ENCODE measurements at regions of chr1 and their contacts with region 1.

Region 1: GRCh38 chr1:175035865-175036264 is 12.6 kb upstream of the MRPS14 start:
- DNase-seq: no peak
- ATAC-seq: no peak
- H3K4me3 Mint-ChIP-seq: no peak overlapping the region
- H3K27ac Mint-ChIP-seq: no peak overlapping the region
- H3K4me1 Mint-ChIP-seq: no peaks in the 10 kb centered on the region
- H3K27me3 Mint-ChIP-seq: no peaks in the 10 kb centered on the region
- CTCF ChIP-seq: no peak

Region 2: GRCh38 chr1:174828264-174828663 is 207.6 kb before region 1 on chr1:
- CTCF ChIA-PET with region 1: no interaction called
- POLR2A ChIA-PET with region 1: no interaction called
- intact Hi-C with region 1: no loop called
- DNase-seq: no peak
- ATAC-seq: no peak
- H3K4me3 Mint-ChIP-seq: no peak overlapping the region
- H3K27ac Mint-ChIP-seq: no peak overlapping the region
- H3K4me1 Mint-ChIP-seq: peaks cover 8% of the 10 kb centered on the region
- H3K27me3 Mint-ChIP-seq: no peaks in the 10 kb centered on the region
- CTCF ChIP-seq: no peak

Region 3: GRCh38 chr1:174850726-174851125 is 185.1 kb before region 1 on chr1:
- CTCF ChIA-PET with region 1: no interaction called
- POLR2A ChIA-PET with region 1: no interaction called
- intact Hi-C with region 1: no loop called
- DNase-seq: no peak
- ATAC-seq: no peak
- H3K4me3 Mint-ChIP-seq: no peak overlapping the region
- H3K27ac Mint-ChIP-seq: no peak overlapping the region
- H3K4me1 Mint-ChIP-seq: no peaks in the 10 kb centered on the region
- H3K27me3 Mint-ChIP-seq: no peaks in the 10 kb centered on the region
- CTCF ChIP-seq: no peak

Region 4: DNA sequence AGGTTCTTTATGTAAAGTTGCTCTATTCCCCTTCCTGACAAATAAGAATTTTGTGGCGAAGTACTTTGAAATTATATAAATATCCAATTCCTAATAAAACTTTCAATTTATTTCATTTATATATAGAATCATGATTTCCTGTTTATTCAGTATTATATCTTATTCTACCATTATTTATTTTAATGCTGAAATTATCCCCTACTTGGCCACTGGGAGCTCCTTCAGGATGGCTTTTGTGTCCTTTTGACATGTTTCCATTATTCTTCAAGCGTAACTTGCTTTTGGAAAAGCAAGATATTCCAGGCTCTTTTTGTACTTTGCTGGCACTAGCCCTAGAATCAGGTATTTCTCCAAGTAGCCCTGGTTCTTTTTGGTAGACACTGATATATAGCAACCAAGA is 103.3 kb before region 1 on chr1:
- CTCF ChIA-PET with region 1: no interaction called
- POLR2A ChIA-PET with region 1: no interaction called
- intact Hi-C with region 1: no loop called
- DNase-seq: no peak
- ATAC-seq: no peak
- H3K4me3 Mint-ChIP-seq: no peak overlapping the region
- H3K27ac Mint-ChIP-seq: no peak overlapping the region
- H3K4me1 Mint-ChIP-seq: peaks cover 3% of the 10 kb centered on the region
- H3K27me3 Mint-ChIP-seq: no peaks in the 10 kb centered on the region
- CTCF ChIP-seq: no peak

Region 5: GRCh38 chr1:175116903-175117302 is 81.0 kb after region 1 on chr1:
- CTCF ChIA-PET with region 1: interaction called, 10 read pairs
- POLR2A ChIA-PET with region 1: no interaction called
- intact Hi-C with region 1: no loop called
- DNase-seq: no peak
- ATAC-seq: no peak
- H3K4me3 Mint-ChIP-seq: no peak overlapping the region
- H3K27ac Mint-ChIP-seq: no peak overlapping the region
- H3K4me1 Mint-ChIP-seq: no peaks in the 10 kb centered on the region
- H3K27me3 Mint-ChIP-seq: peaks cover 5% of the 10 kb centered on the region
- CTCF ChIP-seq: no peak

Region 6: GRCh38 chr1:175124861-175125260 is 89.0 kb after region 1 on chr1:
- CTCF ChIA-PET with region 1: interaction called, 122 read pairs
- POLR2A ChIA-PET with region 1: no interaction called
- intact Hi-C with region 1: loop called (anchors 2 kb)
- DNase-seq: no peak
- ATAC-seq: no peak
- H3K4me3 Mint-ChIP-seq: no peak overlapping the region
- H3K27ac Mint-ChIP-seq: no peak overlapping the region
- H3K4me1 Mint-ChIP-seq: no peaks in the 10 kb centered on the region
- H3K27me3 Mint-ChIP-seq: no peaks in the 10 kb centered on the region
- CTCF ChIP-seq: no peak

Region 7: DNA sequence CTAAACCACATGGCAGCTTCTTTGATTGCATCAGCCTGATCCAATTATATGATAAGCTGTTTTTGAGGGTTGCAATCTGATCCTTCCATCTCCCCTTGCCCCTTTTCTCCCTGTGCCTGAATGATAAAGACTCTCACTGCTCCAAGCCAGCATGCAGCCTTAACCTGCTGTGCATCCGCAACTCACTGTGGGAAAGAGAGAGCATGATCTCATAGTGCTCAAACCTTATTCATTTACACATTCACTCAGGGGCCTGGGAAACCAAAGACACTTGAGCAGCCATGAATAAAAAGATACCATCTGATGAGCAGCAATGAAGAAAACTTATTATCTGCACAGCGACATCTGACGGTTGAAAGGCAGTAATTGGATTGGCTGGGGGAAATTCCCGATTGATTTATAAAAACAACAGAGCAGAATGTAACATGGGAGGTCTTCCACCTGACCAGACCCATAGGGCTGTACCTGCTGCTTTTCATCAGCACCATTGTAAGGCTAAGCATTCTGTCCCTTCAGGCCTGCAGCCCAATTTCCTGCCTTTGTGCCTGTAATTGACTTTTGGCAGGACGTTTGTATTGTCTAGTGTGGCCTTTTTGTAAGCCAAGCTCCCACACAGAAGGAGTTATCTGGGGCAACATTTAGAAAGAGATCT is 94.3 kb after region 1 on chr1:
- CTCF ChIA-PET with region 1: interaction called, 122 read pairs
- POLR2A ChIA-PET with region 1: no interaction called
- intact Hi-C with region 1: loop called (anchors 2 kb)
- DNase-seq: no peak
- ATAC-seq: no peak
- H3K4me3 Mint-ChIP-seq: no peak overlapping the region
- H3K27ac Mint-ChIP-seq: no peak overlapping the region
- H3K4me1 Mint-ChIP-seq: no peaks in the 10 kb centered on the region
- H3K27me3 Mint-ChIP-seq: peaks cover 9% of the 10 kb centered on the region
- CTCF ChIP-seq: no peak